MCF 10A (cell line): ENCODE measurements at regions of chr7 and their contacts with region 1.

Region 1: GRCh38 chr7:22001345-22002004 is 55.8 kb upstream of the CDCA7L start:
- DNase-seq: peak; percentile 73
- H3K4me3 Mint-ChIP-seq: peak overlapping the region; percentile 37
- H3K27ac Mint-ChIP-seq: no peak overlapping the region
- H3K4me1 Mint-ChIP-seq: peaks cover 4% of the 10 kb centered on the region
- H3K27me3 Mint-ChIP-seq: no peaks in the 10 kb centered on the region
- CTCF ChIP-seq: peak; percentile 64

Region 2: GRCh38 chr7:20778063-20778721 is 1223.3 kb before region 1 on chr7:
- CTCF ChIA-PET with region 1: no interaction called
- POLR2A ChIA-PET with region 1: no interaction called
- intact Hi-C with region 1: loop called (anchors 2 kb)
- DNase-seq: peak; percentile 21
- H3K4me3 Mint-ChIP-seq: peak overlapping the region; percentile 58
- H3K27ac Mint-ChIP-seq: no peak overlapping the region
- H3K4me1 Mint-ChIP-seq: peaks cover 10% of the 10 kb centered on the region
- H3K27me3 Mint-ChIP-seq: peaks cover 37% of the 10 kb centered on the region
- CTCF ChIP-seq: peak; percentile 81

Region 3: GRCh38 chr7:21261627-21262594 is 739.6 kb before region 1 on chr7:
- CTCF ChIA-PET with region 1: interaction called, 11 read pairs
- POLR2A ChIA-PET with region 1: no interaction called
- intact Hi-C with region 1: no loop called
- DNase-seq: peak; percentile 45
- H3K4me3 Mint-ChIP-seq: no peak overlapping the region
- H3K27ac Mint-ChIP-seq: no peak overlapping the region
- H3K4me1 Mint-ChIP-seq: no peaks in the 10 kb centered on the region
- H3K27me3 Mint-ChIP-seq: no peaks in the 10 kb centered on the region
- CTCF ChIP-seq: peak; percentile 48

Region 4: GRCh38 chr7:21945454-21946227 is 55.8 kb before region 1 on chr7 and contains the start of gene CDCA7L:
- CTCF ChIA-PET with region 1: interaction called, 14 read pairs
- POLR2A ChIA-PET with region 1: interaction called, 29 read pairs
- intact Hi-C with region 1: loop called (anchors 1 kb)
- DNase-seq: peak; percentile 90
- H3K4me3 Mint-ChIP-seq: peak within 1 kb of the TSS; percentile 81
- H3K27ac Mint-ChIP-seq: peak within 1 kb of the TSS; percentile 98
- H3K4me1 Mint-ChIP-seq: peaks cover 30% of the 10 kb centered on the region
- H3K27me3 Mint-ChIP-seq: no peaks in the 10 kb centered on the region
- CTCF ChIP-seq: no peak
- total RNA-seq, gene CDCA7L: 21.7 and 43.6 TPM in 2 replicates

Region 5: GRCh38 chr7:22013711-22014110 is 12.2 kb after region 1 on chr7:
- CTCF ChIA-PET with region 1: interaction called, 24 read pairs
- POLR2A ChIA-PET with region 1: no interaction called
- intact Hi-C with region 1: no loop called
- DNase-seq: no peak
- H3K4me3 Mint-ChIP-seq: no peak overlapping the region
- H3K27ac Mint-ChIP-seq: no peak overlapping the region
- H3K4me1 Mint-ChIP-seq: no peaks in the 10 kb centered on the region
- H3K27me3 Mint-ChIP-seq: no peaks in the 10 kb centered on the region
- CTCF ChIP-seq: no peak

Region 6: DNA sequence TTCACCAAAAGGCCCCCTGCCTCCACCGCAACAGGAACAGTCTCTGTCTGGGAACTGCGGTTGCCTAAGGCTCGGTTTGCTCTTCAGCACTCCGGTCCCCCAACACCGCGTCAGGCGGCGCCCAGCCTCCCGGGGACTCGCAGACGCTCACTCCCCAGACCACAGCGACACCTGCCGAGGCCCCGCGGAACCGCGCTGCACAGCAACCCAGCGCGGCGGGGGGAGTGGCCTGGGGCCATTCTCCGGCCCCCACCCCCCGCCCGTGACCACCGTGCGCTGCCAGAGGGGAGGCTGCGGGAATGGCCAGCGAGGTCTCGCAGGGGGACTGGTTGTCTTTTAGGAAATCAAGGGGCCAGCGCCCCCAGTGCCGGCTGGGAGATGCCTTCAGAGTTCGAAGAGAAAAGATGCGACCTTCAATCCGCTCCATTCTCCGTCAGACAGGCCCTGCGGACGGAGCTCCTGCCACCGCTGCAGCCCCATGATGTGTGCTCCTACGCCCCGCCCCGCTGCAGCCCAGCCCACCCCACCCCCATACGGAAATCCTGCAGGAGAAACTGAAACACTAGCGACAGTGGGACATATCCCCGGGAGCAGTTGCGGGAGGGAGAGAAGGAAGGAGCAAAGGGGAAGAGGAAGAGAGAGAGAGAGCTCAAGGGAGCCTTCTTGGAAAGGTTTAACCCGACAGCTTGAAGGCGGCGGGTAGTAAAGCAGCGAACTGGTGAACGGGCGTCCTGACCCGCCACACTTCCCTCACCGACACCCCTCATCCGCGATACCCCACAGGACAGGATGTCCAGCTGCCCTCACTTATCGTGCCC is 81.6 kb after region 1 on chr7:
- CTCF ChIA-PET with region 1: interaction called, 9 read pairs
- POLR2A ChIA-PET with region 1: no interaction called
- intact Hi-C with region 1: loop called (anchors 5 kb)
- DNase-seq: peak; percentile 76
- H3K4me3 Mint-ChIP-seq: peak overlapping the region; percentile 73
- H3K27ac Mint-ChIP-seq: peak overlapping the region; percentile 73
- H3K4me1 Mint-ChIP-seq: no peaks in the 10 kb centered on the region
- H3K27me3 Mint-ChIP-seq: peaks cover 22% of the 10 kb centered on the region
- CTCF ChIP-seq: peak; percentile 93